T-cell (primary cell): ENCODE measurements at regions of chr10 and their contacts with region 1.

Region 1: GRCh38 chr10:72260588-72261322 is 13.0 kb upstream of the DDIT4 start:
- DNase-seq: peak; percentile 53 to 88 (median 74)
- ATAC-seq: peak; percentile 74 to 81 (median 76)
- H3K4me3 ChIP-seq: peak overlapping the region; percentile 62
- H3K4me3 Mint-ChIP-seq: peak overlapping the region; percentile 86 to 87 (median 87)
- H3K27ac ChIP-seq: peak overlapping the region; percentile 84
- H3K27ac Mint-ChIP-seq: peak overlapping the region; percentile 94 to 98
- H3K4me1 ChIP-seq: peaks cover 28 to 72% of the 10 kb centered on the region in 2 experiments
- H3K4me1 Mint-ChIP-seq: peaks cover 65 to 71% (median 69%) of the 10 kb centered on the region in 3 donors
- H3K27me3 ChIP-seq: no peaks in the 10 kb centered on the region
- H3K27me3 Mint-ChIP-seq: no peaks in the 10 kb centered on the region

Region 2: GRCh38 chr10:72126184-72126871 is 134.4 kb before region 1 on chr10:
- CTCF ChIA-PET with region 1: interaction called in 1 of 2 experiments, 10 read pairs
- POLR2A ChIA-PET with region 1: no interaction called
- DNase-seq: peak in 1 of 35 experiments; percentile 55
- ATAC-seq: peak in 2 of 4 experiments; percentile 31 to 44
- H3K4me3 ChIP-seq: no peak overlapping the region
- H3K4me3 Mint-ChIP-seq: no peak overlapping the region
- H3K27ac ChIP-seq: no peak overlapping the region
- H3K27ac Mint-ChIP-seq: peak overlapping the region; percentile 28 to 54
- H3K4me1 ChIP-seq: peaks cover 5 to 7% of the 10 kb centered on the region in 2 experiments
- H3K4me1 Mint-ChIP-seq: peaks cover 33 to 37% (median 34%) of the 10 kb centered on the region in 3 donors
- H3K27me3 ChIP-seq: no peaks in the 10 kb centered on the region
- H3K27me3 Mint-ChIP-seq: no peaks in the 10 kb centered on the region

Region 3: GRCh38 chr10:72248468-72249151 is 12.1 kb before region 1 on chr10:
- CTCF ChIA-PET with region 1: interaction called, 3 to 15 read pairs
- POLR2A ChIA-PET with region 1: interaction called, 4 to 7 read pairs
- DNase-seq: peak; percentile 47 to 90 (median 72)
- ATAC-seq: peak; percentile 86 to 92 (median 90)
- H3K4me3 ChIP-seq: peak overlapping the region; percentile 36 to 75
- H3K4me3 Mint-ChIP-seq: peak overlapping the region; percentile 68 to 77 (median 77)
- H3K27ac ChIP-seq: peak overlapping the region; percentile 78
- H3K27ac Mint-ChIP-seq: peak overlapping the region; percentile 94 to 97
- H3K4me1 ChIP-seq: peaks cover 68 to 99% of the 10 kb centered on the region in 2 experiments
- H3K4me1 Mint-ChIP-seq: peaks cover 87 to 88% (median 88%) of the 10 kb centered on the region in 3 donors
- H3K27me3 ChIP-seq: no peaks in the 10 kb centered on the region
- H3K27me3 Mint-ChIP-seq: no peaks in the 10 kb centered on the region

Region 4: GRCh38 chr10:72273410-72274212 is 12.9 kb after region 1 on chr10 and contains the start of gene DDIT4:
- CTCF ChIA-PET with region 1: interaction called, 8 to 10 read pairs
- POLR2A ChIA-PET with region 1: interaction called, 6 read pairs
- DNase-seq: peak; percentile 88 to 99 (median 98)
- ATAC-seq: peak; percentile 89 to 95 (median 93)
- H3K4me3 ChIP-seq: peak within 1 kb of the TSS; percentile 87 to 95
- H3K4me3 Mint-ChIP-seq: peak within 1 kb of the TSS; percentile 92 to 99 (median 92)
- H3K27ac ChIP-seq: peak within 1 kb of the TSS; percentile 88
- H3K27ac Mint-ChIP-seq: peak within 1 kb of the TSS; percentile 93
- H3K4me1 ChIP-seq: peaks cover 7 to 48% of the 10 kb centered on the region in 2 experiments
- H3K4me1 Mint-ChIP-seq: peaks cover 45 to 58% (median 50%) of the 10 kb centered on the region in 3 donors
- H3K27me3 ChIP-seq: no peaks in the 10 kb centered on the region
- H3K27me3 Mint-ChIP-seq: no peaks in the 10 kb centered on the region
- total RNA-seq, gene DDIT4: 39.9 to 326 (median 52.1) TPM

Region 5: DNA sequence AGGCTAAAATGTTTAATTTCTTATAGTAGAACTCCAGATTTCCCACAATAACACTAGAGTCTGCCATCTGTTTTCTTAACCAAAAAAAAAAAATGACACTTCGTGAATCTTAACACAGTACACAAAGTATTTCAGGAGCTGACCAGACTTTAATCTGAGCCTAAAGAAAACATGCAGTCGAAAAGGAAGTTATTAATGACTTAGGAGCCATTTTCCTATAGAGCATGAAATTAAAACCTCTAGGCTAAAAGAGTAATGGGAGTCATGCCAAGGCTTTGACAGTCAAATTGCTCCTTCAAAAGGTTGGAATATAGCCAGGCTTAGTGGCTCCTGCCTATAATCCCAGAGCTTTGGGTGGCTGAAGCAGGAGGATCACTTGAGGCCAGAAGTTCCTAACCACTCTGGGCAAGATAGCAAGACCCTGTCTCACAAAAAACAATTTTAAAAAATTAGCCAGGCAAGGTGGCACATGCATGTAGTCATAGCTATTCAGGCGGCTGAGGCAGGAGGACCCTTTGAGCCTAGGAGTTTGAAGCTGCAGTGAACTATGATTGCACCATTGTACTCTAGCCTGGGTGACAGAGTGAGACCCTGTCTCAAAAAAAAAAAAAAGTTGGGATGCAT is 351.6 kb after region 1 on chr10:
- CTCF ChIA-PET with region 1: no interaction called
- POLR2A ChIA-PET with region 1: no interaction called
- DNase-seq: no peak
- ATAC-seq: no peak
- H3K4me3 ChIP-seq: no peak overlapping the region
- H3K4me3 Mint-ChIP-seq: no peak overlapping the region
- H3K27ac ChIP-seq: no peak overlapping the region
- H3K27ac Mint-ChIP-seq: peak overlapping the region in 1 of 2 donors; percentile 36
- H3K4me1 ChIP-seq: no peaks in the 10 kb centered on the region
- H3K4me1 Mint-ChIP-seq: peaks cover 15 to 18% (median 15%) of the 10 kb centered on the region in 3 donors
- H3K27me3 ChIP-seq: no peaks in the 10 kb centered on the region
- H3K27me3 Mint-ChIP-seq: no peaks in the 10 kb centered on the region